ENCODE measurements at regions of chr11 and their contacts with region 1.

Region 1: GRCh38 chr11:59802639-59803176 is 7.9 kb downstream of the MRPL16 start:
- DNase-seq: peak; percentile 60
- H3K4me3 Mint-ChIP-seq: no peak overlapping the region
- H3K27ac Mint-ChIP-seq: no peak overlapping the region
- H3K4me1 Mint-ChIP-seq: peaks cover 16% of the 10 kb centered on the region
- H3K27me3 Mint-ChIP-seq: no peaks in the 10 kb centered on the region
- CTCF ChIP-seq: peak; percentile 51

Region 2: DNA sequence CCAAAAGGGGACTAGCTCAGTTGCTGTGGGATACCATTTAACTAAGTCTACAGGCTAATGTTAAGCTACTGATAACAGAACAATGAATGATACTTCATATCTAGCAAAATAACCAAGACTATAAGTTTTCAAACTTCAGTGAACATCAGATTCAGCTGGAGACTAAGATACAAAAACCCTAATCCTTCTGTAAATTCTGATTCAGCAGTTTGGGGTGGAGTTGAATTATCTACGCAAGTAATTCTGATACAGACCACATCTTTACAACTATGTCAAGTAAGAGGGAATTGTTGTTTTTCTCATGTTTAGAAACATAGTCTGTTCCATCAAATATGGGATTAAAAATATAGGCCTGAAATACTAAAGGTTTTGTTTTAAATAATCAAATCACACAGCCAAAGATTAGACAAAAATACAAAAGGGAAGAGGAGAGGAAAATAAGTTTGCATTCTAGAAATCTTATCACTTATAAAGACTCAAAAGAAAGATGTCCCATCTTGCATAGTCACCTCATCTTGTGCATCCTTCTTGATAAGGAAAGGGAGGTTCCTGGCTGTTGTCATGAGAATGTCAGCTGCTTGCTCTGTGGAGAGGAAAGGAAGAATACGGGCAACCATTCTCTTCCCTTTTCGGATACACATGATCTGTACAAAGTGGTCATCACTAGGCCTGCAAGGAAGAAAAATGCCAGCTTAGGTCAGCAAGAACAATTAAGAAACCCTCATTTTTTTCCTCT is 155.3 kb before region 1 on chr11:
- CTCF ChIA-PET with region 1: interaction called, 8 read pairs
- intact Hi-C with region 1: loop called (anchors 5 kb)
- DNase-seq: no peak
- H3K4me3 Mint-ChIP-seq: no peak overlapping the region
- H3K27ac Mint-ChIP-seq: no peak overlapping the region
- H3K4me1 Mint-ChIP-seq: no peaks in the 10 kb centered on the region
- H3K27me3 Mint-ChIP-seq: no peaks in the 10 kb centered on the region
- CTCF ChIP-seq: no peak

Region 3: GRCh38 chr11:59960502-59961381 is 158.0 kb after region 1 on chr11:
- CTCF ChIA-PET with region 1: no interaction called
- intact Hi-C with region 1: no loop called
- DNase-seq: no peak
- H3K4me3 Mint-ChIP-seq: no peak overlapping the region
- H3K27ac Mint-ChIP-seq: no peak overlapping the region
- H3K4me1 Mint-ChIP-seq: peaks cover 20% of the 10 kb centered on the region
- H3K27me3 Mint-ChIP-seq: no peaks in the 10 kb centered on the region
- CTCF ChIP-seq: no peak

Region 4: GRCh38 chr11:60111793-60112192 is 309.1 kb after region 1 on chr11:
- CTCF ChIA-PET with region 1: no interaction called
- intact Hi-C with region 1: no loop called
- DNase-seq: no peak
- H3K4me3 Mint-ChIP-seq: no peak overlapping the region
- H3K27ac Mint-ChIP-seq: no peak overlapping the region
- H3K4me1 Mint-ChIP-seq: peaks cover 14% of the 10 kb centered on the region
- H3K27me3 Mint-ChIP-seq: no peaks in the 10 kb centered on the region
- CTCF ChIP-seq: no peak